ENCODE measurements at regions of chr12 and their contacts with region 1.

Region 1: DNA sequence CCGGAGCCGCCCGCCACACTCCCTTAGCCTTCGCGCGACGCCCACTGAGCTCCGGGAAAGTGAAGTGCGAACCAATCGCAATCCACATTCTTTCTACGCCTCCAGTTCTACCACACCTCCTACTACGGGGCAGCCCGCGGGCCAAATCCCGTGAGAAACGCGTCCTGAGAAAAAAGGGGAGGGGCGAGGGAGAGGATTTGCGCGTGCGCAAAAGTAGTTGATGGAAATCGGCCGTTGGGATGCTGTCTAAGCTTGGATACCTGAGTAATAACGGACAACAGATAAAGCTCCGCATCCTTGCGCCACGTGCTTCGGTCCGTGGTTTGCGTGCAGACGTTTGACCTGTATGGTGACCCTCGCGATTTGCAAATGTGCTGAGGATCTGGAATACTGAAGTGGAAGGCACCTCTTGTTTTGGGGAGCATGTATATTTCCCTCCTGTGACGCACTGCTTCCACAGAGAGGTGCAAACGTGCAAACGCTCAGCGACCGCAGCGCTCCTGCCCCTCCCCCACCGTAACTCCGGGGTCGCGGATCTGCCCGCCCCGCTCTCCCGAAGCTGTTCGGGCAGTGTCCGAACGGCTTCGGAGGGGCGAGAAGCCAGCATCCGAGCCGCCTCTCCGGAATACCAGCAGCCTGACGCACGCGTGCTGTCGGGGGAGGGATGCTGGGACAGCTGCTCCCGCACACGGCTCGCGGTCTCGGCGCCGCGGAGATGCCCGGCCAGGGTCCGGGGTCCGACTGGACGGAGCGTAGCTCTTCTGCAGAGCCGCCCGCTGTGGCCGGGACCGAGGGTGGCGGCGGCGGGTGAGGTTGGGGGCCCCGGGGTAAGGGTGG is at the starts of genes FAM216A and GPN3:
- DNase-seq: peak; percentile 98
- H3K4me3 Mint-ChIP-seq: peak within 1 kb of the TSS; percentile 98
- H3K27ac Mint-ChIP-seq: peak within 1 kb of the TSS; percentile 97
- H3K4me1 Mint-ChIP-seq: peaks cover 43% of the 10 kb centered on the region
- H3K27me3 Mint-ChIP-seq: no peaks in the 10 kb centered on the region
- total RNA-seq, gene FAM216A: 14.6 to 17.5 TPM
- total RNA-seq, gene GPN3: 19.0 to 21.2 TPM

Region 2: DNA sequence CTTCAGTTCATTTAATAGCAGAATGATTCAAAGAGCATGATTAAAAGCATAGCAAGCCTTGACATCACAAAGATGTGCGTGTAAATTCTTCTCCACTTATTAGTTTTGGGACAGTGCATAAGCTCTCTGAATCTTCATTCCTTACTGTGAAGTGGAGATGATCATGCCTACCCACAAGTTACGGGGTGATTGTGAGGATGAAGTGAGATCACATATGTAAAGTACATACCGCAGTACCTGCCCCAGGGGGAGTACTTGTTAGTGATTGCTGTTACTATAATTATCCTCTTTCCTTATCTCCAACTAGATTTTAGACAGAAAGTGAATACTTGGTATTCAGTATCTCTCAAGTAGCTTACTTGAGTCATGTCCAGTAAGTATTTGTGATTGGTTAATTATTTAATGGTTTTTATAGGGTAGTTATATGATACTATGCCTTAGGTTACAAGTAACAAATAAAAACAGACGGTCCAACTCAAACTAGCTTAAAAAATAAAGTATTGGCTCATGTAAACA is 39.7 kb after region 1 on chr12:
- CTCF ChIA-PET with region 1: interaction called, 9 read pairs
- POLR2A ChIA-PET with region 1: interaction called, 13 read pairs
- DNase-seq: no peak
- H3K4me3 Mint-ChIP-seq: no peak overlapping the region
- H3K27ac Mint-ChIP-seq: no peak overlapping the region
- H3K4me1 Mint-ChIP-seq: peaks cover 4% of the 10 kb centered on the region
- H3K27me3 Mint-ChIP-seq: no peaks in the 10 kb centered on the region

Region 3: GRCh38 chr12:110528277-110528839 is 59.9 kb after region 1 on chr12:
- CTCF ChIA-PET with region 1: no interaction called
- POLR2A ChIA-PET with region 1: no interaction called
- DNase-seq: no peak
- H3K4me3 Mint-ChIP-seq: no peak overlapping the region
- H3K27ac Mint-ChIP-seq: no peak overlapping the region
- H3K4me1 Mint-ChIP-seq: peaks cover 16% of the 10 kb centered on the region
- H3K27me3 Mint-ChIP-seq: no peaks in the 10 kb centered on the region

Region 4: DNA sequence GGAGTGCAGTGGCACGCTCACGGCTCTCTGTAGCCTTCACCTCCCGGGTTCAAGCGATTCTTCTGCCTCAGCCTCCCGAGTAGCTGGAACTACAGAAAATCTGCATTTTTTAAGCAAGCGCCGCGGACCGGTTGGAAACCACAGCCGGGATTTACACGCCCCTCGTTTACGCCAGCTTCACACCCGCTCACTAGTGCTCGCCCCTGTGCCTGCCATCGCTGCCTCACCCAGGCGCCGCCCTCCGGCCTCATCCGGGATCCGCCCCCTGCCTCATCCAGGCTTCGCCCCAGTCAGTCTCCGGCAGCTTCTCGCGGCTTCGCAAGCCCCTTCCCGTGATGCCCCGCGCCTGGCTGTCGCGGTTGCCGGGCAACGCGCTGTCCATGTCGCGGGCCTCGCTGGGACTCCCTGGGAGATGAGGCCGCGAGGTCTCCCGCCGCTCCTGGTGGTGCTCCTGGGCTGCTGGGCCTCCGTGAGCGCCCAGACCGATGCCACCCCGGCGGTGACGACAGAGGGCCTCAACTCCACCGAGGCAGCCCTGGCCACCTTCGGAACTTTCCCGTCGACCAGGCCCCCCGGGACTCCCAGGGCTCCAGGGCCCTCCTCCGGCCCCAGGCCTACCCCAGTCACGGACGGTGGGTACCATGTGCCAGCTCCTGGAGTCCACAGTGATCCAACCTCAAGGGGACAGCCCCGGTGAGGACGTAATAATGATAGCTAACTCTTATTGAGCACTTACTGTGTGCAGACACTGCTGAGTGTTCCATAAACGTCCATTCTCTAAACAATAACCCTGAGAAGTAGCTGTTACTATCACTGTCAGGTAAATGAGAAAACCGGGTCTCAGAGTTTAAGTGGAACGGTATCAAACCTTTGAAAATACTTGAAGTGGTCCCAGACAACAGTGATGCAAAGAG is 145.6 kb after region 1 on chr12 and contains the start of gene TCTN1:
- CTCF ChIA-PET with region 1: interaction called, 16 read pairs
- POLR2A ChIA-PET with region 1: interaction called, 3 read pairs
- DNase-seq: peak; percentile 98
- H3K4me3 Mint-ChIP-seq: peak within 1 kb of the TSS; percentile 83
- H3K27ac Mint-ChIP-seq: peak within 1 kb of the TSS; percentile 93
- H3K4me1 Mint-ChIP-seq: peaks cover 15% of the 10 kb centered on the region
- H3K27me3 Mint-ChIP-seq: no peaks in the 10 kb centered on the region
- total RNA-seq, gene TCTN1: 4.3 to 5.2 TPM

Region 5: DNA sequence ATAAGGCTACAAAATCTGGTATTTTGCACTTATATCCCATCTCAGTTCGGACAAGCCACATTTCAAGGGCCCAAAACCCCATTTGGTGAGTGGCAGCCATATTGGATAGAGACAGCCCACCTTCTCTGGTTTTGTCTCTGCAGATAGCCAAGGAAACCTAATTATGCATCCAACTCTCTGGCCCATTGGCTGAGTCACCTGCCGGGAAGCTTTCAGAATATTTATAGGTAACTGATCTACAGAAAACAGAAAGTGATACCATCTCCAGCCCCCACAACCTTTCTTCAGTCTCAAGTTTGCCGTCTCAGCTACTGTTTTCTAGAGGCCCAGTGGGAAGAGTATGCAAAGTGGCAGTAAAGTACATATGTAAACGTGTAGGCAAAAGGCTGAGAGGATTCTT is 308.0 kb after region 1 on chr12:
- CTCF ChIA-PET with region 1: no interaction called
- POLR2A ChIA-PET with region 1: interaction called, 11 read pairs
- DNase-seq: peak; percentile 48
- H3K4me3 Mint-ChIP-seq: no peak overlapping the region
- H3K27ac Mint-ChIP-seq: peak overlapping the region; percentile 82
- H3K4me1 Mint-ChIP-seq: peaks cover 68% of the 10 kb centered on the region
- H3K27me3 Mint-ChIP-seq: no peaks in the 10 kb centered on the region

Measured in activated CD4-positive, alpha-beta T cell treated with anti-CD3 and anti-CD28 coated beads, Interleukin-2, amount 10 ng/mL, durations not matched to agents 7 days and 5 days (primary cell).